ENCODE measurements at regions of chr4 and their contacts with region 1.

Region 1: GRCh38 chr4:1910643-1911042 is 39.5 kb downstream of the NSD2 start:
- DNase-seq: peak; percentile 65
- H3K4me3 ChIP-seq: no peak overlapping the region
- H3K27ac ChIP-seq: no peak overlapping the region
- H3K4me1 ChIP-seq: no peaks in the 10 kb centered on the region
- H3K27me3 ChIP-seq: no peaks in the 10 kb centered on the region
- CTCF ChIP-seq: peak; percentile 51 to 74
- POLR2A ChIP-seq: no peak

Region 2: GRCh38 chr4:1172971-1173757 is 737.5 kb before region 1 on chr4:
- CTCF ChIA-PET with region 1: no interaction called
- POLR2A ChIA-PET with region 1: no interaction called
- dilution Hi-C with region 1: no loop called
- intact Hi-C with region 1: no loop called
- DNase-seq: no peak
- H3K4me3 ChIP-seq: no peak overlapping the region
- H3K27ac ChIP-seq: no peak overlapping the region
- H3K4me1 ChIP-seq: no peaks in the 10 kb centered on the region
- H3K27me3 ChIP-seq: peaks cover 33 to 35% of the 10 kb centered on the region in 2 experiments
- CTCF ChIP-seq: no peak
- POLR2A ChIP-seq: no peak

Region 3: DNA sequence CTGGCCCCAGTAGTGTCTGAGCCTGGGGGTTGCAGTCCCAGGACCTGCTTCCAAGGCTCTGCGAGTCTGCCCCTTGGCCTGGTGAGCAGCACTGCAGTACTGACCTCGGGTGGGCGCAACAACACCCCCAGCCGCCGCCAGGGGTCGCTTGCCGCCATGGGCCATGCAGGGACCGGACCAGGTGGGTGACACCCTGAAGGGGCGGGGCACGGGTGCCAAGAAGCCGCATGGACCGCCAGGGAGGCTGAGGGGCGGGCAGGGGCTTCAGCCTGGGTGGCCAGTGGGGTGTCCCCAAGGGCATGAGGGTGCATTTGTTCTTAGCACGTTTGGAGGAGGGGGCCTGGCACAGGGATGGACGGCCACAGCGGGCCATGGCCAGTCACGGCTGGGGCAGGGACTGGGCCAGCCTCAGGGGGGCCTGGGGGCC is 164.4 kb before region 1 on chr4:
- CTCF ChIA-PET with region 1: interaction called, 25 read pairs
- POLR2A ChIA-PET with region 1: no interaction called
- dilution Hi-C with region 1: no loop called
- intact Hi-C with region 1: loop called (anchors 1 kb)
- DNase-seq: peak; percentile 75
- H3K4me3 ChIP-seq: no peak overlapping the region
- H3K27ac ChIP-seq: no peak overlapping the region
- H3K4me1 ChIP-seq: peaks cover 4% of the 10 kb centered on the region
- H3K27me3 ChIP-seq: no peaks in the 10 kb centered on the region
- CTCF ChIP-seq: peak; percentile 93 to 96
- POLR2A ChIP-seq: no peak

Region 4: DNA sequence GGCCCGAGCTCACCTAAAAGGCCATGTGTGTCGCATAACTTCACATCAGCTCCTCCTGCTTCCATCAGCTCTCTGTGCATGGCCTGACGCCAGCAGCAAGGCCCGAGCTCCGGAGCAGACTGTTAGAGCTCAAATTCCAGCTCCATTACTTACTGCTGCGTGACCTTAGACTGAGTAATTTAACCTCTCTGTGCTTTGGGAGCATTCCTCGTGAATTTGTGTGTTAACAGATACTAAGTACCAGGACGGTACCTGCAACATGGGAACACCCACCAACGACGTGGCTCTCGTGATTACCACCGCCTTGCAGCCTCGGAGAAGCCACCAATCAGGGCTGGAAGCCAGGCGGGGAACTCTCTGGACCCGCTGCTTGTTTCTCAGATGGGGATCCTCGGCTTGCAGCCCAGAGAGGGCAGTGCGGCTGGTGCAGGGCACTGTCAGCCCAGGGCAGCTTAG is 67.6 kb before region 1 on chr4:
- CTCF ChIA-PET with region 1: interaction called, 14 read pairs
- POLR2A ChIA-PET with region 1: no interaction called
- dilution Hi-C with region 1: no loop called
- intact Hi-C with region 1: no loop called
- DNase-seq: peak; percentile 40
- H3K4me3 ChIP-seq: no peak overlapping the region
- H3K27ac ChIP-seq: no peak overlapping the region
- H3K4me1 ChIP-seq: no peaks in the 10 kb centered on the region
- H3K27me3 ChIP-seq: no peaks in the 10 kb centered on the region
- CTCF ChIP-seq: no peak
- POLR2A ChIP-seq: no peak

Region 5: DNA sequence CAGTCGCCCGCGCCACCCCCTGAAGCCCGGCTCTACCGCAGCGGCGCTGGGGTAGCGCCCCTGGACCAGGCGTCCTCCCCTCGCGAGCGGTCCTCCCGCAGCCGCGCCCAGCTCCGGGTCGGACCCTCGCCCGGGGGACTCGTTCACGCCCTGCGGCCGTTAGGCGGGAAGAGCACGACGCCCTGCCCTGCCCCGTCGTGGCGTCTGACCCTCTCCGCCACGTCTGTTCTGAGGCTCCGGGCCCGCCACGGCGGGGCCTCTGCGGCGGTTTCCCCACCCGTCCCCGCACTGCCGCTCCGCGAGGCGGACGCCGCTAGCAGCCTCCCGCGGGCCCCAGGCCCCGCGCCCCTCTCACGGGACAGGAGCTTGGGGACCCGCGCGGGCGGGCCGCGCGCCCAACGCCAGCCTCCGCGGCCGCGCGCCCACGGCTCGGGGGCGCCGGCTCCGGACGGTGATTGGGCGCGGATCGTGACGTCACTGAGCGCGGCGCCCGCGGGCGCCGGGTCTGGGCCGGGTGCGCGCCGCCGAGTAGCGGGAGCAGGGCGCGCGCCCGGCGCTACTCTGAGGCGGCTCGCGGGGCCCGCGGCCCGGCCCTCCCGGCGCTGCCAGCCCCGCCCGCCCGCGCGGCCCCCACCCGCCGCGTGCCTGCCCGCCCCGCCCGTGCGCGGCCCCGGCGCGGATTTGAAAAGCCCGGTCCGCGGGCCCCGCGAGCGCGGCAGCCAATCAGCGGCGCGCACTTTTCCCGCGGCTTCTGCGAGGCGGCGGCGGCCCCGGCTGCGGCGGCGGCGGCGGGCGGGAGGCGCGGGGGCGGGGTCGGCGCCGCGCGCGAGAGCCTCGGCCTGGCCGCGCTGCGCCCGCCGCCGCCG is 39.8 kb before region 1 on chr4 and contains the start of gene NSD2:
- CTCF ChIA-PET with region 1: interaction called, 3 read pairs
- POLR2A ChIA-PET with region 1: interaction called, 8 read pairs
- dilution Hi-C with region 1: no loop called
- intact Hi-C with region 1: loop called (anchors 1 kb)
- DNase-seq: peak; percentile 81
- H3K4me3 ChIP-seq: peak within 1 kb of the TSS; percentile 78 to 95 (median 86)
- H3K27ac ChIP-seq: peak within 1 kb of the TSS; percentile 93
- H3K4me1 ChIP-seq: peaks cover 17% of the 10 kb centered on the region
- H3K27me3 ChIP-seq: peaks cover 0 to 1% of the 10 kb centered on the region in 2 experiments
- CTCF ChIP-seq: no peak
- POLR2A ChIP-seq: peak; percentile 93
- total RNA-seq, gene NSD2: 152 and 171 TPM in 2 replicates

Region 6: DNA sequence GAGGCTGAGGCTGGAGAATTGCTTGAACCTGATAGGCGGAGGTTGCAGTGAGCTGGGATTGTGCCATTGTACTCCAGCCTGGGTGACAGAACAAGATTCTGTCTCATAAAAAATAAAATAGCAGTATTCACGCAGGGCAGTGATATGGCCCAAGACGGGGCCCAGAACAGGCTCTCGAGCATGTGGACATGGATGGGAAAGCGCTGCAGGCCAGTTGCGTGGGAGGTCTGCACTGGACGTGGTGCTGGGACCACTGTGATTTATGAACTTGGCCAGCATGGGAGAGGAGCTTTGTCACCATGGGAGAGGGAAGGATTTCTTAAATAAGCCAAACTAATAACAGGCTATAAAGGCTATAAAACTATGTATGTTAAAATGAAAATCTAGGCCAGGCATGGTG is 12.2 kb after region 1 on chr4:
- CTCF ChIA-PET with region 1: interaction called, 13 read pairs
- POLR2A ChIA-PET with region 1: no interaction called
- dilution Hi-C with region 1: no loop called
- intact Hi-C with region 1: no loop called
- DNase-seq: no peak
- H3K4me3 ChIP-seq: no peak overlapping the region
- H3K27ac ChIP-seq: no peak overlapping the region
- H3K4me1 ChIP-seq: no peaks in the 10 kb centered on the region
- H3K27me3 ChIP-seq: no peaks in the 10 kb centered on the region
- CTCF ChIP-seq: no peak
- POLR2A ChIP-seq: no peak

Measured in endothelial cell of umbilical vein (primary cell).